ENCODE measurements at regions of chrX and their contacts with region 1.

Region 1: GRCh38 chrX:109709129-109709631 is 23.9 kb downstream of the ACSL4 start:
- DNase-seq: peak; percentile 6
- H3K4me3 ChIP-seq: no peak overlapping the region
- H3K27ac ChIP-seq: peak overlapping the region; percentile 5
- H3K4me1 ChIP-seq: peaks cover 12% of the 10 kb centered on the region
- H3K27me3 ChIP-seq: no peaks in the 10 kb centered on the region
- CTCF ChIP-seq: no peak
- POLR2A ChIP-seq: no peak

Region 2: GRCh38 chrX:108736509-108737479 is 972.4 kb before region 1 on chrX and contains the start of gene IRS4:
- CTCF ChIA-PET with region 1: no interaction called
- POLR2A ChIA-PET with region 1: no interaction called
- dilution Hi-C with region 1: no loop called
- intact Hi-C with region 1: loop called (anchors 5 kb)
- DNase-seq: peak; percentile 13
- H3K4me3 ChIP-seq: peak within 1 kb of the TSS; percentile 31 to 48 (median 37)
- H3K27ac ChIP-seq: no peak within 1 kb of the TSS
- H3K4me1 ChIP-seq: peaks cover 4% of the 10 kb centered on the region
- H3K27me3 ChIP-seq: peaks cover 45 to 57% of the 10 kb centered on the region in 2 experiments
- CTCF ChIP-seq: no peak
- POLR2A ChIP-seq: no peak
- total RNA-seq, gene IRS4: not detected in 2 replicates

Region 3: DNA sequence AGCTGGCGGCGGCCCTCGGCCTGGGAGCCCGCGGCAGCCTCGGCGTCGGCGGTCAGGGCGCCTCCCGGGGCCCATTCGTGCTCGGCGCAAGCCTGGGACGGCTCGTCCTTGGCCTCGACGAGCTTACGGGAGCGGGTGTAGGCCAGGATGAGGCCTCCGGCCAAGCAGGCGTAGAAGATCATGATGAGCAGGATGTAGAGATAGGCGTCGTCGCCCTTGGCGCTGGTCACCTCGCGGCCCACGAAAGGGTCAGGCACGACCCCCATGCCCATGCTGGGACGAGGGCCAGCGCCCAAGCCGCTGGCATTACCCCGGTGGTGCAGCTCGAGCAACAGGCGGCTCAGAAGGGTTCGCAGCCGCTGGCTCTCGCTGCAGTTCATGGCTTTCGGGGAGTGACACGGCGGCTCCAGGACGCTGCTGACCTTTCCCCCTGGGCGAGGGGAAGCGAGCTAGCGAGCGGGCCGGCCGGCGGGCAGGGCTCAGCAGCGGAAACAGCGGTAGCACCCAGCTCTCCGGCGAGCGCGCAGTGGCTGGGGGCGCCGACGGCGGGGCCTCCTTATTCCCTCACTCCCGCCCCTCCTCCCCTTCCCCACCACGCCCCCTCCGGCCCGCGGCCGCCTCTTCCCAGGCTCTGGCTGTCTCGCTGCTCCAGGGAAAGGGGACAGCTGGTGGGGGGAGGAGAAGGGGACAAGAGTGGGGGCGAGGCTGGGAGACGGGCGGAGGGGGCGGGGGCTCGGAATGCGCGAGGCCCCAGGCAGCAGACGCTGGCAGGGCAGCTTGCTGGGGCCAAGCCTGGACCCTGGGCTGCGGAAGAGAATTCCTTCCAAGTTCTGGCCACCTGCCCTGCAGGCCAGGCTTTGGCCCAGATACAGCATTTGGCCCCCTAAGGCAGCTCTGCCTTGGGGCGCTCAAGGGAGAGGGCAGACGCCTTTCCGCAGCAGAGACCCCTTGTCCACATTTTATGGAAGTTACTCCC is 84.3 kb before region 1 on chrX and contains the start of gene KCNE5:
- CTCF ChIA-PET with region 1: no interaction called
- POLR2A ChIA-PET with region 1: no interaction called
- dilution Hi-C with region 1: no loop called
- intact Hi-C with region 1: no loop called
- DNase-seq: no peak
- H3K4me3 ChIP-seq: peak within 1 kb of the TSS in 1 of 3 experiments; percentile 25
- H3K27ac ChIP-seq: no peak within 1 kb of the TSS
- H3K4me1 ChIP-seq: peaks cover 7% of the 10 kb centered on the region
- H3K27me3 ChIP-seq: no peaks in the 10 kb centered on the region
- CTCF ChIP-seq: no peak
- POLR2A ChIP-seq: no peak
- total RNA-seq, gene KCNE5: 0.31 and 0.44 TPM in 2 replicates

Region 4: GRCh38 chrX:110167952-110168451 is 458.8 kb after region 1 on chrX:
- CTCF ChIA-PET with region 1: no interaction called
- POLR2A ChIA-PET with region 1: no interaction called
- dilution Hi-C with region 1: no loop called
- intact Hi-C with region 1: no loop called
- DNase-seq: no peak
- H3K4me3 ChIP-seq: no peak overlapping the region
- H3K27ac ChIP-seq: no peak overlapping the region
- H3K4me1 ChIP-seq: peaks cover 9% of the 10 kb centered on the region
- H3K27me3 ChIP-seq: no peaks in the 10 kb centered on the region
- CTCF ChIP-seq: peak; percentile 43 to 48
- POLR2A ChIP-seq: no peak

Measured in endothelial cell of umbilical vein (primary cell).